ENCODE measurements at regions of chr3 and their contacts with region 1.

Region 1: DNA sequence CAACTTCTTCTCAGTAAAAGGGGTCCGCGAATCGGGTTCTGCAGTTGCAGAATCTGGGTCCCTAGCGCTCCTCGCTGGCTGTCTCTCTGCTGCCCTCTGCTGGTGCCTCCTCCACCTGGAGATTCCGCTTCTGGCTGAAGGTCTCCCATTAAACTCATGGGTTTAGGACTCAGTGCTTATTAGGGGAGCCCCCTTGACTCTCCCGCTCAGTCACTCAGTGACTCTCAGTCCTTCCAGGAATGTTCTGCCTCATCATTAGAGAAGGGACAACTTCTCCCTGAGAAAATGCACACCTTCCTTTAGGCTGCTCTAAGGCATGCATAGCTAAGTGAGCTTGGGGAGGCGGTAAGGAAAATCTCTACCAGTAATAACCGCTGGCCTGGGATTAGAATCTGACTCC is 7.1 kb downstream of the CPN2 start:
- DNase-seq: peak; percentile 79
- H3K27ac ChIP-seq: no peak overlapping the region
- CTCF ChIP-seq: peak; percentile 97

Region 2: DNA sequence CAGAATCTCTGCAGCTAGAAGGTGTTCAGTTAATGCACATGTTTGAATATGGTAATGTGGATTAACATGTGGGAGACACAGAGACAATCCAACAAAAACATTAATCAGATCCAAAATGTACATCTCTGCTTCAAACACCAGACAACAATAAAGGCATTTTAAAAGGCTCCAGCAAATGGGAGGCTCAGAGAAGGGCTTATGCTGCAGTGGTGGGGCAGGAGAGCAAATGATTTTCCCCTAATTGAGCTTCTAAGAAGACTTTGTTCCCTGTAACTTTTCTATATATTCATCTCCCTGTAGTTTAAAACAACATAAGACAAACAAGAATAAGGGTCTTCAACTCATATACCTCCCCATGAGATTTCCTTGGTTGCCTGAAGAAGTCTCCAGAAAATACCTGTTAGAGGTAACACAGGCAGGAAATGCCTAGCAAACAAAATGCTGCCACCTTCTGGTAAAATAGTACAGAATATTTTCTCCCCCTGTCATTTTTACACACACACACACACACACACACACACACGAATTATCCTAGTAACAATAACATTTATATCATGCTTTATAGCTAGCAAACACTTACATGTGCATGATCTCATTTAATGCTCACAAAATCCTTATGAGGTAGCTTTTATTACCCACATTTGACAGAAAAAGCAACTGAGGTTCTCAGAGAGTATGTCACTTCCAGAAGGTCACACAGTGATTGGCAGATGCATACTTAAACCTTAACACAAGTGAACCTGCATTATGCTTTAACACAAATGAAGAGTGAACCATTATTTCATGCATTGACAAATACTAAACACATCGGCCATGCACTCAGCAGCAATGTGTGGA is 1303.0 kb before region 1 on chr3:
- CTCF ChIA-PET with region 1: no interaction called
- POLR2A ChIA-PET with region 1: no interaction called
- DNase-seq: peak; percentile 50
- H3K27ac ChIP-seq: no peak overlapping the region
- CTCF ChIP-seq: peak; percentile 68

Region 3: GRCh38 chr3:193665370-193665989 is 678.5 kb before region 1 on chr3:
- CTCF ChIA-PET with region 1: interaction called, 10 read pairs
- POLR2A ChIA-PET with region 1: no interaction called
- DNase-seq: peak; percentile 20
- H3K27ac ChIP-seq: no peak overlapping the region
- CTCF ChIP-seq: peak; percentile 58

Region 4: DNA sequence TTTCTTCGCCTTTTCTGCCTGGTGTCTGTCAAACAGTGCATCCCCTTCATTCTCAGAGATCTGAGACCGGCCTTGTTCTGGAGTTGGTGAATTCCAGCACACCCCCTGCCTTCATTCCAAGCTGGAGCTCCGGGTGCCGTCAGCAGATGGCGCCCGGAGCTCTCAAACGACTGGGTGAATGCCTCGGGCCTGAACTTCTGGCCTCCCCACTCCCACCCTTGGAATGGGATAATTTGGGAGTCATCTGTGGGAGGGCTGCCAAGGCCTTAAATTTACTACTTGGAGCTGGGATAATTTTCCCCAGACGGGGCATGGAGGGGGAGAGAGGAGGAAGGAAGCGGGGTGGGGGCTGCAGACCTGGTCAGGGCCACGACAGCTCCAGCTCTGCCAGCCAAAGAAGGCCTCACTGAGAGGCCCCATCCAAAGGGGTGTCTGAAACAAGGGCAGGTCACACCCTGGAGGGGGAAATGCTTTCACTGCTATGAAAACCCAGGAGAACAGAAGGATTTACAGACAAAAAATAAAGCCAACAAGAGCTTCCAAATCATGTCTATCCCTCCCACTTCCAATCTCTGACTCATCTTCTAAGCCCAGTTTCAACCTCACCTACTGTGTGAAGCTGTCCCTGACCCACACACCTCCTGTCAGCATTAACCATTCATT is 563.1 kb before region 1 on chr3:
- CTCF ChIA-PET with region 1: interaction called, 13 read pairs
- POLR2A ChIA-PET with region 1: no interaction called
- DNase-seq: peak; percentile 97
- H3K27ac ChIP-seq: peak overlapping the region; percentile 95
- CTCF ChIP-seq: peak; percentile 89

Region 5: GRCh38 chr3:194296454-194297263 is 47.4 kb before region 1 on chr3:
- CTCF ChIA-PET with region 1: no interaction called
- POLR2A ChIA-PET with region 1: no interaction called
- DNase-seq: peak; percentile 92
- H3K27ac ChIP-seq: peak overlapping the region; percentile 93
- CTCF ChIP-seq: no peak

Region 6: DNA sequence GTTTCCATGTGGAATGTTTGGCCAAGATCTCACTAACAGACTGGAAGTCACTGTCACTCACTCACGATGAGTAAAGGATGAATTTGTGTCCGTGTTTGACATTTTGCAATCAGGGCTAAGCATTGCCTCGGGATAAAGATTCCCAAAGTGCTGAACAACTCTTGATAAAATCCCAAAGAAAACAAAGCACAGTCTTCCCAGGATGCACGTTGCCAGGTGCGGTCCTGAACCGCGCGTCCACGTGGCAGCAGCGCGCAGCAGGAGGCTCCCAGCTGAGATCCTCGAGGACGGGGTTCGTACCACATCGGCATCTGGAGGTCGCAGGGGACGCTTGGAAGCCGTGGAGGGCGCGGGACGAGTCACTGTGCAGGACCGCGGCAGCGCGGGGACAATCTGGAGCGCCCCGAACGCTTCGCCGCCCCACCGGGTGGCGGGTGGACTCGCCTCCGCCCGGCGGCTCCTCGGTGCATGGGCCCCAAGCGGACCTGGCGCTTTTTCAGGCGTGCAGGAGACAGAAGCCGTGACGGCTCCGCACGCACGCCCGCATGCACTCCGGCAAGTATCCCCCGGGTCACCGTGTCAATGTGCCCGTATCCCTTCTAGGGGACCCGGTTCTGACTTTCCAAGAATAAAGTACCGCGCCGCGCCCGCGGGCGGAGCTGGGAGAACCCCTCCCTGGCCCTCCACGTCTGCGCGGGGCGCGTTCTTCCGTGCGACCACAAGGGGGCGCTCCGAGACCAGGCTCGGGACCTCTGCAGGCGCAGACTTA is 10.6 kb before region 1 on chr3:
- CTCF ChIA-PET with region 1: interaction called, 20 read pairs
- POLR2A ChIA-PET with region 1: no interaction called
- DNase-seq: peak; percentile 64
- H3K27ac ChIP-seq: peak overlapping the region; percentile 92
- CTCF ChIP-seq: peak; percentile 96

Region 7: GRCh38 chr3:194355379-194355778 is 11.4 kb after region 1 on chr3:
- CTCF ChIA-PET with region 1: interaction called, 10 read pairs
- POLR2A ChIA-PET with region 1: no interaction called
- DNase-seq: no peak
- H3K27ac ChIP-seq: no peak overlapping the region
- CTCF ChIP-seq: no peak

Region 8: GRCh38 chr3:194364652-194365434 is 20.8 kb after region 1 on chr3:
- CTCF ChIA-PET with region 1: interaction called, 12 read pairs
- POLR2A ChIA-PET with region 1: no interaction called
- DNase-seq: no peak
- H3K27ac ChIP-seq: peak overlapping the region; percentile 59
- CTCF ChIP-seq: no peak